ENCODE measurements at regions of chr20 and their contacts with region 1.

Region 1: DNA sequence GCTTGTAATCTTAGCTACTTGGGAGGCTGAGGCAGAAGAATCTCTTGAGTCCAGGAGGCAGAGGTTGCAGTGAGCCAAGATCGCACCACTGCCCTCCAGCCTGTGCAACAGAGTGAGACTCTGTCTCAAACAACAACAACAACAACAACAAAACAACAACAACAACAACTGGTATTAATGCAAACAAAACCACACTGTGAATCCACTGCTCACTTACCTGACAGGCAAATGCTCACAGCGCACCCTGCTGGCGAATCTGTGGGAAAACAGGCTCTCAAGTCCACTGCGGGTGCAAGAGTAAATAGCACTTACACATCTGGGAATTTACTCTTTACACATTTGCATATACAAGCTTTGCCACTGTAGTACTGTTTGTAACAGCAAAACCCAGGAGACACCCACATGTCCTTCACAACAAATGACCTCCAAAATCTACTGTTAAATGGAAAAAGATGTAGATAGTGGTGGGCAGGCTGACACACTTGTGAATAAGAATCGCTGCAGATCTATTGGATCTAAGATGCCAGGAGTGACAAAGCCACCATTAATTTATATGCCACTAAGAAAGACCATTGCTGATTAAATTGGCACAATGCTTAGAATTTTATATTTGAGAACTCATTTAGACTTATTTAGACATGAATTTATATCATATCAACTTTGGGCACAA is 29.3 kb downstream of the NSFL1C start:
- DNase-seq: peak; percentile 57 to 87 (median 82)
- ATAC-seq: peak; percentile 65
- H3K4me3 ChIP-seq: no peak overlapping the region
- H3K4me3 Mint-ChIP-seq: no peak overlapping the region
- H3K27ac ChIP-seq: no peak overlapping the region
- H3K27ac Mint-ChIP-seq: no peak overlapping the region
- H3K4me1 ChIP-seq: peaks cover 27% of the 10 kb centered on the region
- H3K4me1 Mint-ChIP-seq: peaks cover 41% of the 10 kb centered on the region
- H3K27me3 ChIP-seq: peaks cover 0 to 5% of the 10 kb centered on the region in 2 experiments
- H3K27me3 Mint-ChIP-seq: no peaks in the 10 kb centered on the region
- CTCF ChIP-seq: peak; percentile 82

Region 2: DNA sequence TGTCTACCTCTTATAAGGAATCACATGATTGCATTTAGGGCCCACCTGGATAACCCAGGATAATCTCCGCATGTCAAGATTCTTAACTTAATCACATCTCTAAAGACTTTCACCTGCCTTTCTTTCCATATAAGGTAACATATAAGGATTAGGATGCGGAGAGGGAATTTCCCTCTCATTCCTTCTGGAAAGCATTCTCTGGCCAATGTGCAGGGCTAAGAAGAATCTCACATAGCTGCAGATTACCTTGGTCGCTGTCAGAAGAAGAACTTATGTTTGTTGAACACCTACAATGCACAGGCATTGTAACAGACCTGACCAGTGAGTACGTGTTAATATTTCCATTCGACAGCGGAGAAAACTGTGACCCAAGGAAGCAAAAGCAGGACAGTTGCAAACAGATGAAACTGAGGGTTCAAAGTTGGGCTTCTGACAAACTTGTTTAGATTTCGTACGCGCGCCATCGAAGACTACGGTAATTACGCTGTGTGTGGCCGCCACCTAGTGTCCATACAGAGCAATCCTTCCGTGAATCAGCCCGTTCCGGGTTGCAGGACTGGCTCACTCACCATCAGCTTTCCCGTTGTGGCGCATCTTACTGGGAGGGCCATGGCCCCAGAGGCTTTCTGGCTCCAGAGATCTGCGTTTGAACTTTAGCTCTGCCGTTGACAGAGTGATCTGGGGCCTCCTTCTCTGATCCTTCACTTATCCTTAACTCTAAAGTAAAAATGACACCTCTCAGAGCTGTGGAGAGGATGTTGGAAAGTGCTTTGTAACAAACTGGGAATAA is 224.6 kb before region 1 on chr20:
- CTCF ChIA-PET with region 1: interaction called, 3 read pairs
- POLR2A ChIA-PET with region 1: no interaction called
- intact Hi-C with region 1: loop called in 1 of 2 experiments (anchors 5 kb)
- DNase-seq: peak; percentile 26 to 80 (median 68)
- ATAC-seq: peak; percentile 93
- H3K4me3 ChIP-seq: no peak overlapping the region
- H3K4me3 Mint-ChIP-seq: no peak overlapping the region
- H3K27ac ChIP-seq: no peak overlapping the region
- H3K27ac Mint-ChIP-seq: no peak overlapping the region
- H3K4me1 ChIP-seq: peaks cover 24% of the 10 kb centered on the region
- H3K4me1 Mint-ChIP-seq: peaks cover 34% of the 10 kb centered on the region
- H3K27me3 ChIP-seq: no peaks in the 10 kb centered on the region
- H3K27me3 Mint-ChIP-seq: peaks cover 8% of the 10 kb centered on the region
- CTCF ChIP-seq: peak; percentile 88

Region 3: GRCh38 chr20:1225783-1226654 is 211.4 kb before region 1 on chr20 and contains the start of gene RAD21L1:
- CTCF ChIA-PET with region 1: interaction called, 4 read pairs
- POLR2A ChIA-PET with region 1: no interaction called
- intact Hi-C with region 1: loop called in 1 of 2 experiments (anchors 10 kb)
- DNase-seq: peak; percentile 63 to 85 (median 80)
- ATAC-seq: peak; percentile 93
- H3K4me3 ChIP-seq: peak within 1 kb of the TSS; percentile 64 to 82
- H3K4me3 Mint-ChIP-seq: peak within 1 kb of the TSS; percentile 87
- H3K27ac ChIP-seq: peak within 1 kb of the TSS in 1 of 2 experiments; percentile 44
- H3K27ac Mint-ChIP-seq: no peak within 1 kb of the TSS
- H3K4me1 ChIP-seq: peaks cover 9% of the 10 kb centered on the region
- H3K4me1 Mint-ChIP-seq: peaks cover 18% of the 10 kb centered on the region
- H3K27me3 ChIP-seq: peaks cover 0 to 8% of the 10 kb centered on the region in 2 experiments
- H3K27me3 Mint-ChIP-seq: peaks cover 13% of the 10 kb centered on the region
- CTCF ChIP-seq: no peak
- total RNA-seq, gene RAD21L1: not detected

Region 4: GRCh38 chr20:1313236-1313964 is 124.0 kb before region 1 on chr20:
- CTCF ChIA-PET with region 1: interaction called, 48 read pairs
- POLR2A ChIA-PET with region 1: no interaction called
- intact Hi-C with region 1: loop called (anchors 1 kb)
- DNase-seq: peak; percentile 20 to 83 (median 69)
- ATAC-seq: peak; percentile 82
- H3K4me3 ChIP-seq: no peak overlapping the region
- H3K4me3 Mint-ChIP-seq: no peak overlapping the region
- H3K27ac ChIP-seq: no peak overlapping the region
- H3K27ac Mint-ChIP-seq: no peak overlapping the region
- H3K4me1 ChIP-seq: peaks cover 6% of the 10 kb centered on the region
- H3K4me1 Mint-ChIP-seq: peaks cover 8% of the 10 kb centered on the region
- H3K27me3 ChIP-seq: no peaks in the 10 kb centered on the region
- H3K27me3 Mint-ChIP-seq: no peaks in the 10 kb centered on the region
- CTCF ChIP-seq: peak; percentile 99

Region 5: DNA sequence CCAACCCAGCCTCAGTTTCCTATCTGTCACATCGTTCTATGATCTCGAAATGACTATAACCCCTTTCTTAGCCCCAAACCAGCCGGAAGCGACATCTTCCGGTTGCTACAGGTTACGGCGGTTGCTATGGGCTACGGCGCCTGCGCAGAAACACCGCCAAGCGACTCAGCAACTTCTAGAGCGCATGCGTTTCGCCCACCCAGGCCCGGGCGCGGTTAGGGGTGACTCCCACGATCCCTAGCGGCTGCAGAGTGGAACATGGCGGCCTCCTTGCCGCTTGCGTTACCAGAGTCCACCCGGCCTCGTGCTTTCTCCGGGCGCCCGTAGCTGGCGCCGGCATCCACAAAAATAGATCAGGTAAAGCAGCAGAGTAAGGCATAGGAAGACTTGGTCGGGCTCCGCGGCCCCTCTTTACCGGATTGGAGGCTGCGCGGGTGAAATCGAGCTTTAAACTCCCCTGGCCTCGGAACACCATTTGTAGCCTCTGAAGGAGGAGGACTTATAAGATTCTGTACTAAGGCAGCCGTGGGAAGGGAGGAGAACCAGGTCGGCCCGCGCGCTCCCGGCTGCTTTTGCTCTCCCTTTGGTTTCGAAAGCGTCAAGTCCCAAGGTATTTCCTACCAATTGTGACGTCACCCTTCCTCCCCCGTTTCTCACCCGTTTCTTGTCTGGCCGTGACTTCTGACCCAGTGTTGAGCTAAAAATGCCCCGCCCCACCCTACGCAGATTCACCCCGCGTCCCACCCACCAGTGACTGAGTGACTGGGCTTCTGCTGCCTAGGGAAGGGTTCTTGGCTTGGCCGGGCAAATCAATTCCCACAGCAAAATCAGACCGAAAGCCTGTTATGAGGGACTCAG is 112.0 kb before region 1 on chr20:
- CTCF ChIA-PET with region 1: interaction called, 48 read pairs
- POLR2A ChIA-PET with region 1: interaction called, 4 read pairs
- intact Hi-C with region 1: loop called in 1 of 2 experiments (anchors 2 kb)
- DNase-seq: peak; percentile 98 to 100 (median 99)
- ATAC-seq: peak; percentile 86
- H3K4me3 ChIP-seq: peak overlapping the region; percentile 81 to 97
- H3K4me3 Mint-ChIP-seq: no peak overlapping the region
- H3K27ac ChIP-seq: peak overlapping the region; percentile 94 to 99
- H3K27ac Mint-ChIP-seq: no peak overlapping the region
- H3K4me1 ChIP-seq: peaks cover 38% of the 10 kb centered on the region
- H3K4me1 Mint-ChIP-seq: peaks cover 20% of the 10 kb centered on the region
- H3K27me3 ChIP-seq: no peaks in the 10 kb centered on the region
- H3K27me3 Mint-ChIP-seq: no peaks in the 10 kb centered on the region
- CTCF ChIP-seq: no peak

Region 6: DNA sequence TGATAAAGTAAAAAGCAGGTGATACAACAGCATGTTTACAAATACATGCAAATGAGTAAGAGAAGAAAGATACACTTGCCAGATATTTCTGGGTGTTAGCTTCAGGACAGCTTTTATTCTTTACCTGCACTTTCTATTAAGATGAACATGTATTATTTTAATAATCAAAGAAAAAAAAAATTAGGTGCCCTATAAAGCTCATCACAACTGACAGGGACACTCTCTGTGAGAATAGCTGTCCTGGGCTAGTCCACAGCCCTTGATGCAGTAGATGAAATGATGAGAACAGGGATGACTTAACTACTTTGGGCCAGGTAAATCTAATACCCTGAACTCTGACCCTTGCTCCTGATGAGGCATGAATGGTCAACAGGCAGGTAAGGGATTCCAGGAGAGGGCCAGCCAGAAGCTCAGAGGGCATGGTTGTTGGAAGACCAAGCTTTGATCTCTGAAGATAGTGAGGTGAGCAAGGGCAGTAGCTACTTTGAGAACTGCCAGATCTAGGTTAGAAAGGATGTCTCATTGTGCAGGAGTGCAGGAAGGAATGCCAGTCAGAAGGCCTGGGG is 13.6 kb after region 1 on chr20:
- CTCF ChIA-PET with region 1: interaction called, 64 read pairs
- POLR2A ChIA-PET with region 1: no interaction called
- intact Hi-C with region 1: no loop called
- DNase-seq: peak in 1 of 9 experiments; percentile 11
- ATAC-seq: no peak
- H3K4me3 ChIP-seq: no peak overlapping the region
- H3K4me3 Mint-ChIP-seq: no peak overlapping the region
- H3K27ac ChIP-seq: no peak overlapping the region
- H3K27ac Mint-ChIP-seq: no peak overlapping the region
- H3K4me1 ChIP-seq: no peaks in the 10 kb centered on the region
- H3K4me1 Mint-ChIP-seq: no peaks in the 10 kb centered on the region
- H3K27me3 ChIP-seq: no peaks in the 10 kb centered on the region
- H3K27me3 Mint-ChIP-seq: no peaks in the 10 kb centered on the region
- CTCF ChIP-seq: no peak

Region 7: DNA sequence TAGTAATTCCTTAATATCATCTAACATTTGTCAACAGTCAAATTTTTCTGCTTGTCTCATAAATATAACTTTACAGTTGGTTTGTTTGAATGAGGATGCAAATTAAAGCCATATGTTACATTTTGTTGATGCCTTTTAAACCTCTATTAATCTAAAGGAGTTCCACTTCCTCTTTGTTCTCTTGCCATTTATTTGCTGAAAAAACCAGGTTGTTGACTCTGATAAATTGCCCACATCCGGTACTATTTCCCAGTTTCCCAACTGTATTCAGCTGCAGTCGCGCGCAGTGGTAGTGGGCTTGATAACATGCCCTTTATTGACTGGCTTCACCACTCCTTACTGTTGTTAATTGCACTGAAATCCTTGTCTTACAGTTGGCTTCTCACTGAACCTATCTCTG is 86.6 kb after region 1 on chr20:
- CTCF ChIA-PET with region 1: no interaction called
- POLR2A ChIA-PET with region 1: no interaction called
- intact Hi-C with region 1: no loop called
- DNase-seq: no peak
- ATAC-seq: no peak
- H3K4me3 ChIP-seq: no peak overlapping the region
- H3K4me3 Mint-ChIP-seq: no peak overlapping the region
- H3K27ac ChIP-seq: no peak overlapping the region
- H3K27ac Mint-ChIP-seq: no peak overlapping the region
- H3K4me1 ChIP-seq: no peaks in the 10 kb centered on the region
- H3K4me1 Mint-ChIP-seq: peaks cover 3% of the 10 kb centered on the region
- H3K27me3 ChIP-seq: no peaks in the 10 kb centered on the region
- H3K27me3 Mint-ChIP-seq: no peaks in the 10 kb centered on the region
- CTCF ChIP-seq: no peak

Measured in CD8-positive, alpha-beta T cell (primary cell).